ENCODE measurements at regions of chr5 and their contacts with region 1.

Region 1: DNA sequence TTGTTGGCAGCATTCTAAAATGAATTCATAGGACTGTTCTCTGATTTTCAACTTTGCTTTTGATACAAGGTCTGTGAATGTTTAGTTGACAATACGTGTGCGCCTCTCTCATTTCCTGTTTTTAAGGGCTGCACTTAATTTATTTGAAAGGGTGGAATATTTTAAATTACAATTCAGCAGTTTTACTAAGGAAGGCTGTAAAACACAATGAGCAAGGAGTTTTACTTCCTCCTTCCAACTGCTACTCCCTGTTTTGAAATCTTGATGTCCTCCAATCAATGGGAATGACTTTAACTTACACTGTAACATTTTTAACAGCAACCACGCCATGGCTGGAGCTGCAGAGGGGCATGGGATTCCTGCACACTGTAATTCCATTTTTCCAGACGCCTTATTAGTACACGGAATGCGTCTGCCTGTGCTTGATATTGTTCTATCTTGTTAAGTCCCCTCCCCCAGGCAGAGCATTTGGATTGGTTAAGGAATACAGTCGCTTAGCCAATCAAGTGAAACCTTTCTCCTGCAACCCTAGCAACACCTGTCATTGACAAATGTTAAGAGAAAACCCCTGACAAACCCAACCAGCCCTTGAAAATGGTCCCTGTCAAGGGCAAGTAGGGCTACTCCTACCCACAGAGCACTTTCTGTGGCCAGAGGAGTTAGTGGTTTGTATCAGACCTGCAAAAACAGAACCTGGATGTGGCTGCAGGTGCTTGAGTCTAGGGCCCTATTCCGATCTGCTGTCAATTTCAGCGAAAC is 12.5 kb upstream of the ZSWIM6 start:
- DNase-seq: peak in 3 of 4 donors; percentile 26 to 59 (median 53)
- ATAC-seq: peak; percentile 89
- H3K4me3 ChIP-seq: no peak overlapping the region
- H3K27ac ChIP-seq: peak overlapping the region in 2 of 4 donors; percentile 24 to 51
- H3K4me1 ChIP-seq: peaks cover 12% of the 10 kb centered on the region
- H3K27me3 ChIP-seq: no peaks in the 10 kb centered on the region
- CTCF ChIP-seq: no peak
- POLR2A ChIP-seq: peak in 1 of 3 donors; percentile 7

Region 2: DNA sequence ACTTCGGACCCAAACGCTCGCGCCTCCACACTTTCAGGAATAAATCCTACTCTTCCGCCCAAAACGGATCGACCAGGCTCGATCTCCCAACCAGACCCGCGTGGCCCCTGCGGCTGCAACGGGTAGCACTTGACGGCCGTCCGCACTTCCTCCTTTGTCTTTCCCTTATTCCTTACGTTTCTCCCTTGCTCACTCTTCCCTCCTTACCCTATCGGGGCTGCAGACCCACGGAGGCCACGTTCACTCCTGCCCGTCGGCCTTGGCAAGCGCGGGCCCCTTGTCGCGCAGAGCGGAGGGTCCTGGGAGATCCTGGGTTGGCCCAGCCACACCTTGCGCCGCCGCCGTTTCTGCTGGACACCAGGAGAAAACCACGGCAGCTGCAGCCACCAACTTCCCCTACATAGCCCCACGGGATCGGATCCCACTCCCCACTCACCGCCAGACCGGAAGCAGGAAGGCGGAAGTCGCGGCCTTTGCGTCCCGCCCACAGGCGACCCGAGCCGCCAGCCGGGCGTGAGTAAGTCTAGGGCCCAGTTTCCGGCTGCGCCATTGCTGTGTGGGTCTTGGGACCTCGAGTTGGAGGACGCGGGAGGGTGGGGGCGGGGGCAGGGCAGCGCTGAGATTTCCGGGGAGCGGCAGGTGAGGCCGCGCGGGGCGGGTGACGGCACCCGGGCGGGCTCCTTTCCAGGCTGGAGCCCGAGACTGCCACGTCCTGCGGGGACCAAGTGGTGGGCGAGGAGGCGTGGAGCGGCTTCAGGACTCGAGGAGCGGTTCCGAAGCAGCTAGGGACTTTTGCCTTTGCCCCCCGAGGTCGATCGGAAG is 157.3 kb before region 1 on chr5 and contains the start of gene SMIM15:
- intact Hi-C with region 1: loop called (anchors 10 kb)
- DNase-seq: peak; percentile 89 to 94 (median 92)
- ATAC-seq: peak; percentile 95
- H3K4me3 ChIP-seq: peak within 1 kb of the TSS; percentile 35 to 85
- H3K27ac ChIP-seq: peak within 1 kb of the TSS; percentile 84 to 98 (median 94)
- H3K4me1 ChIP-seq: peaks cover 34% of the 10 kb centered on the region
- H3K27me3 ChIP-seq: no peaks in the 10 kb centered on the region
- CTCF ChIP-seq: peak in 3 of 7 experiments; percentile 12 to 47 (median 39)
- POLR2A ChIP-seq: peak; percentile 75 to 84 (median 84)
- total RNA-seq, gene SMIM15: 8.2 to 15.6 TPM